Esophagus squamous epithelium (tissue), 5 donors: ENCODE measurements at regions of chr11 and their contacts with region 1.

Region 1: GRCh38 chr11:109946322-109946846 is 146.8 kb upstream of the ZC3H12C start:
- DNase-seq: peak; percentile 14
- H3K4me3 ChIP-seq: peak overlapping the region in 3 of 4 donors; percentile 6 to 54 (median 12)
- H3K27ac ChIP-seq: peak overlapping the region; percentile 48 to 72 (median 54)
- H3K4me1 ChIP-seq: peaks cover 0 to 11% (median 3%) of the 10 kb centered on the region in 3 donors
- H3K27me3 ChIP-seq: no peaks in the 10 kb centered on the region
- CTCF ChIP-seq: peak; percentile 73 to 95 (median 88)
- POLR2A ChIP-seq: peak in 1 of 4 donors; percentile 12

Region 2: GRCh38 chr11:109853156-109853776 is 93.1 kb before region 1 on chr11:
- intact Hi-C with region 1: no loop called
- DNase-seq: no peak
- H3K4me3 ChIP-seq: no peak overlapping the region
- H3K27ac ChIP-seq: no peak overlapping the region
- H3K4me1 ChIP-seq: no peaks in the 10 kb centered on the region
- H3K27me3 ChIP-seq: no peaks in the 10 kb centered on the region
- CTCF ChIP-seq: peak in 4 of 6 experiments; percentile 20 to 71 (median 38)
- POLR2A ChIP-seq: no peak

Region 3: DNA sequence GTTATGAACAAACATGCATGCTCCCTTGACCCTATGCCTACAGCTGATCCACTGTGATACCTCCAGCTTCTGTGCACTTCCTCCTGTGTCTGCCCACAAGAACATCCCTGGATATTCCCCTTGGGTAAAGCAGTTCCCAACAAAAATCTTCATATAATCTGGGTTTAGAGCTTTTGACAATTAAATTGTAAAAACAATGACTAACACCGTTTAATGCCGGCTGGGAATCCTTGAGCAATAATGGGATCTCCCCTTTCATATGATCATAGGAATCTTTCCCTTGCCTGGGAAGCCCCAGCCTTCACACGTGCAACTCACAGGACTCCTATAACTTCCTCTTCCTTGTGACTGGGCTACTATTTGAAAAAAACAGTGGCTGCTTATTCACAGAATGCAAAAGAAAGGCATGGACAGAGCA is 140.5 kb after region 1 on chr11:
- intact Hi-C with region 1: loop called (anchors 5 kb)
- DNase-seq: no peak
- H3K4me3 ChIP-seq: no peak overlapping the region
- H3K27ac ChIP-seq: no peak overlapping the region
- H3K4me1 ChIP-seq: peaks cover 0 to 20% (median 4%) of the 10 kb centered on the region in 3 donors
- H3K27me3 ChIP-seq: no peaks in the 10 kb centered on the region
- CTCF ChIP-seq: no peak
- POLR2A ChIP-seq: no peak

Region 4: GRCh38 chr11:110376711-110377324 is 430.4 kb after region 1 on chr11:
- intact Hi-C with region 1: loop called (anchors 5 kb)
- DNase-seq: no peak
- H3K4me3 ChIP-seq: peak overlapping the region; percentile 5 to 45 (median 28)
- H3K27ac ChIP-seq: peak overlapping the region in 2 of 4 donors; percentile 49 to 59
- H3K4me1 ChIP-seq: peaks cover 0 to 21% (median 13%) of the 10 kb centered on the region in 3 donors
- H3K27me3 ChIP-seq: no peaks in the 10 kb centered on the region
- CTCF ChIP-seq: peak; percentile 65 to 76 (median 75)
- POLR2A ChIP-seq: no peak